Posterior vena cava (tissue), 2 donors: ENCODE measurements at regions of chr7 and their contacts with region 1.

Region 1: GRCh38 chr7:106959753-106960152 is 84.8 kb upstream of the PRKAR2B start:
- DNase-seq: no peak

Region 2: DNA sequence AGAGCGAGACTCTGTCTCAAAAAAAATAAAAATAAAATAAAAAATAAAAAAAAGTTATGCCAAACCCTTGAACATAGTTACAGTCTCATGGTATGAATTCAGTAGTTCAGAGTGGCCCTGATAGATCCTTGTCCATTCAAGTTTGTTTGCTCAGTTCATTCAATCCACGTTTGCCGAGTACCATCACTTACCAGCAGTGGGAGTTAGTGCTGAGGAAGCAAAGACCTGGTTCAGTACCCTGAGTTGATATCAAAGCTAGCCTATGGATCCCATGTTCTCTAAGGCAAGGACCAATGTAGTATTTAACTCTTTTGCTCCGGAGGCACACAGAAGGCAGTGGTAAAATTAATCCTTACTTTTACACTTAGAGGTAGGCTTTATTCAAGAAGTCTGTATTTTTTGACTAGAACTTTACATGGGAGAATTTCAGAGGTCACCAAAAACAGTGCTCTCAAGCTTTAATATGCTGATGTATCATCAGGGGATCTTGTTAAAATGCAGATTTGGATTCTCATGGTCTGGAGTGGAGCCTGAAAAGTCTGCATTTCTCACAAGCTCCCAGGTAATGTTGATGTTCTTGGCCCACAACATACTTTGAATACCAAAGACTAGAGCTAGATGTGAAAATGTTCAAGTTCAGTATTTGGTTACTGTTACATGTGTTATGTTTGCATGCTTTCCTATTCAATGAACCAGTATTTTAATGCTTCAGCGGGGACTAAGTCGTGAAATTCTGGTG is 170.9 kb after region 1 on chr7:
- intact Hi-C with region 1: loop called in 1 of 2 experiments (anchors 10 kb)
- DNase-seq: no peak

Region 3: DNA sequence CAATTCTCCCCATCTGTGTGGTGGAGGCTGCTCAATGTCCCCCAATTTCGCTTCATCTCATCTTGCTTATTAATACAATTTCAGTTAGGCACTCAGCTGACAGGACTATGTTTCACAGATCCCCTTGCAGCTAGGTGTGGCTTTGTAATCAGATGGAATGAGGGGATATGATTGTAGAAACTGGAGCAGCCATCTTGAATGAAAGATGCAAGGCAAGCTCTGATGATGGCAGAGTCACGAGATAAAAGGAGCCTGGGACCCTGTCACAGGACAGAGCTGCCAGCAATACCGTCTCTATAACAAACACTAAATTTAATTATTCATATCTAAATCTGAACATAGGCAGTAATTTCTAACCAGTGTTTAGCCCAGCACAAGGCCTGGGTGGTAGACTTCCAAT is 930.2 kb after region 1 on chr7:
- intact Hi-C with region 1: loop called in 1 of 2 experiments (anchors 5 kb)
- DNase-seq: no peak